RWPE1 (cell line): ENCODE measurements at regions of chr17 and their contacts with region 1.

Region 1: DNA sequence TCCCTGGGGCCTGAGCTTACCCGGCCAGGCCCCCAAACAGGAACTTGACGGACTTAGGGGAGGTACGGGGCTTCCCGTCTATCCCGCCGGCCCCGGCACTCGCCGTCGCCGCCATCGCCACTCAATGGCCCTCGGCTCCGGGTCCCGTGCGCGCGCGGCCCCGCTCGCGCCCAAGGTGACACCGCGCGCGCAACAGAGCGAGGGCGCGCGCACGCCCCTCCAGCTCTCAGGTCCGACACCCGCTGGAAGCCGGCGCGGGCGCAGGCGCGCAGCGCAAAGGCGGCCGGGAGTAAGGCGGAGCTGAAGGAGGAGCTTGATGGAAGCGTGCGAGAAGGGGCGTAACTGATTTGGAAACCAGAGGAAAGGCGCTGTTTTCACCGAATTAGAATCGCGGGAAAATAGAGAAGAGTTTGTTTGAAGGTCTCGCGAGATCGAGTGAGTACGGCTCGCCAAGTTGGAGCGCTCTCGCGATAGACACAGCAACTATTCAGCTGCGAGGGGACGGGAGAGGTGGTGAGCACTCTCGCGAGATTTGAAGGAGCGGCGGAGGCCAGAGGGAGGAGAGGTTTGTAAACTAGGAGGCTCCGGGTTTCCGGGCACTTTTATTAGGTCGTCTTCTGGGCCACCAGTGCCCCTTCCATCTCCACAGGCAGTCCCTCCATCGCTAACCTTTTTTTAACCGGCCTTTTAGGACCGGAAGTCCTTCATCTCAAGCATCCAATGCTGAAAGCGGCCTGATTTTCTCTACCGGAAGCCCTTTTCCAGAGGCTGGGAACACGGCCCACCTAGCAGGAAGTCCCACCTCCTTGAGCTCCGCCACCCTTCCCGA is at the starts of genes RNF167 and SLC25A11:
- DNase-seq: peak; percentile 98
- H3K27ac ChIP-seq: peak within 1 kb of the TSS; percentile 98
- CTCF ChIP-seq: no peak

Region 2: GRCh38 chr17:4833178-4833940 is 106.7 kb before region 1 on chr17 and contains the start of gene MINK1:
- CTCF ChIA-PET with region 1: no interaction called
- POLR2A ChIA-PET with region 1: no interaction called
- DNase-seq: peak; percentile 99
- H3K27ac ChIP-seq: peak within 1 kb of the TSS; percentile 92
- CTCF ChIP-seq: no peak

Region 3: GRCh38 chr17:4908301-4908700 is 31.7 kb before region 1 on chr17:
- CTCF ChIA-PET with region 1: interaction called, 9 read pairs
- POLR2A ChIA-PET with region 1: interaction called, 18 read pairs
- DNase-seq: peak; percentile 46
- H3K27ac ChIP-seq: peak overlapping the region; percentile 97
- CTCF ChIP-seq: no peak